Pancreas (tissue), 10 donors: ENCODE measurements at regions of chr6 and their contacts with region 1.

Region 1: DNA sequence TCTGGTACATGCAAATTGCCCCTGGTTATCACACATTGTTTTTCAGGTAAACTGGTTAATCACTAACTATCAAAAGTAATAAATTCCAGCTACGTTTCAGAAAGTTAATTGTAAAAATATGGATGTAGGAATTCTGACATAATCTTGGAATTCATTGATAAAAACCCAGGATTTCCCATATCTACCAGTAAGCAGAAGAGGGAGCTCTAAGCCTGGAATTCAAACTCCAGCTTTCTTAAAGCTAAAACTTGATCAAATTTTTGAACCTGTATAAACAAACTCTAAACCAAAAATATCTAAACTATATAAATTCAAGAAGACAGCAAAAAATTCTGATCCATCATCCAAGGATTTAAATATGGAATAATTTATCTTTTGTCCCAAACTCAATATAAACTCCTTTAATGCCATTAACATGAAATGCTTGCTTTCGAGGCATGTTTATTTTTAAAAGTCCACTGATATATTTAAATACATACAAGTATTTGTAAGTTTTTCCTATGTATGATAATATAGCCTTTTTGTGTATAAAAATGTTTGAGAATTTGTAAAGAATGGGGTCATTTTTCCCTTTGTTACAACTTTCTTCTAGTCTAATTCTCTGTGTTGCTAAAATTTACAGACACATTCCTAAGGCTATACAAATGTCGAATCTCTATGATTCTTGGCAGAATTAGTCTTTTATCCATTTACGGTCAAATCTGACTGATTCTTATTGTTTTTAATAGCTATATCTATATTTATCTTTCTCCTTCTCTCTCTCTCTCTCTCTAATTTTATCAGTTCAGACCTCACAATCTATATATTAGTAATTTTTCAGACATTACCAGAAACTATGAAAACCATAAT is 91.4 kb upstream of the RNF217 start:
- DNase-seq: no peak
- ATAC-seq: peak in 3 of 4 donors; percentile 56 to 63 (median 58)
- H3K4me3 ChIP-seq: no peak overlapping the region
- H3K27ac ChIP-seq: no peak overlapping the region
- H3K4me1 ChIP-seq: no peaks in the 10 kb centered on the region
- H3K27me3 ChIP-seq: no peaks in the 10 kb centered on the region
- CTCF ChIP-seq: peak; percentile 25 to 54 (median 44)

Region 2: GRCh38 chr6:125114248-125114858 is 243.5 kb after region 1 on chr6:
- intact Hi-C with region 1: loop called in 2 of 3 experiments (anchors 2 to 10 kb)
- DNase-seq: peak in 3 of 6 donors; percentile 23 to 60 (median 33)
- ATAC-seq: peak in 3 of 4 donors; percentile 63 to 77 (median 75)
- H3K4me3 ChIP-seq: no peak overlapping the region
- H3K27ac ChIP-seq: no peak overlapping the region
- H3K4me1 ChIP-seq: no peaks in the 10 kb centered on the region
- H3K27me3 ChIP-seq: no peaks in the 10 kb centered on the region
- CTCF ChIP-seq: peak; percentile 28 to 77 (median 66)

Region 3: GRCh38 chr6:125123788-125124777 is 253.2 kb after region 1 on chr6:
- intact Hi-C with region 1: loop called in 2 of 3 experiments (anchors 5 to 10 kb)
- DNase-seq: no peak
- ATAC-seq: no peak
- H3K4me3 ChIP-seq: no peak overlapping the region
- H3K27ac ChIP-seq: no peak overlapping the region
- H3K4me1 ChIP-seq: no peaks in the 10 kb centered on the region
- H3K27me3 ChIP-seq: no peaks in the 10 kb centered on the region
- CTCF ChIP-seq: no peak